ENCODE measurements at regions of chr3 and their contacts with region 1.

Region 1: DNA sequence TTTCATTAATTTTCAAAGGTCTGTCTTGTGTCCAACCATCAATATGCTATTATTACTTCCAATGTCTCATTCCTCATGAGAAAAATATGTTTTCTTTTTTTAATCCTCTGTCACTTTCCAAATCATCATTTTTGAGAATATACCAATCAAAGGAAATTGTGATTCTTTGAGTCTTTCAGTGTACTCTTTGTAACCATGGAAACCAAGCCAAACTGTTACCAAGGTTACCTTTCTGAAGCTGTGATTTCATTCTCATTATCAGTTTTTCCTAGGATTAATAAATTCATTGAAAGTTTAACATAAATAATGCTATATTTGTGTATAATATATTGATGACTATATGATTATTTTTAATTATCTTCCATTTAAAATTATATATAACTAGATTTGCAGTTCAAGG is 16.6 kb upstream of the PLSCR5 start:
- DNase-seq: no peak
- H3K4me3 ChIP-seq: no peak overlapping the region
- H3K27ac ChIP-seq: no peak overlapping the region
- H3K4me1 ChIP-seq: no peaks in the 10 kb centered on the region
- H3K27me3 ChIP-seq: no peaks in the 10 kb centered on the region
- CTCF ChIP-seq: no peak

Region 2: DNA sequence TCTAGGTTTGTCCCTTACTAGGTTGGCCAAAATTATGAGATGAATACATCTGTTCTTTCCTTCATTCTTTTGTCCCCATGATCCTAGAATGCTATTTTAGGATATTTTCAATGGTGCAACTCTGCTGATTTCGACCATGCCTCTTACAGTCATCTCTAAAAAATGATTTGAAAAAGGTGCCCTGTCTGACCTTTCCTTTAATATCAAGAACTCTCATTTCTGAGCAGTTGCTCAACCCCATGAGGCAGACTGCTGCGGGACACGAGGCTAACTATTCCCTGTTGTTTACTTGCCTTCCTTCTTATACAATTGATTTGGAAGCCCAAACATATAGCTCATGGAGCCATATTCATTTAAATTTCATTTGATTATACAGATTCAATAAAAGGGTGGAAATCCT is 166.9 kb before region 1 on chr3:
- intact Hi-C with region 1: no loop called
- DNase-seq: no peak
- H3K4me3 ChIP-seq: no peak overlapping the region
- H3K27ac ChIP-seq: no peak overlapping the region
- H3K4me1 ChIP-seq: no peaks in the 10 kb centered on the region
- H3K27me3 ChIP-seq: no peaks in the 10 kb centered on the region
- CTCF ChIP-seq: no peak

Region 3: GRCh38 chr3:146469150-146470017 is 152.3 kb before region 1 on chr3 and contains the start of gene PLSCR2:
- intact Hi-C with region 1: no loop called
- DNase-seq: peak in 1 of 2 donors; percentile 79
- H3K4me3 ChIP-seq: peak within 1 kb of the TSS; percentile 55 to 66
- H3K27ac ChIP-seq: peak within 1 kb of the TSS; percentile 19 to 68
- H3K4me1 ChIP-seq: peaks cover 0 to 24% (median 7%) of the 10 kb centered on the region in 4 donors
- H3K27me3 ChIP-seq: no peaks in the 10 kb centered on the region
- CTCF ChIP-seq: no peak

Region 4: GRCh38 chr3:147572970-147573340 is 951.2 kb after region 1 on chr3:
- intact Hi-C with region 1: loop called (anchors 5 kb)
- DNase-seq: no peak
- H3K4me3 ChIP-seq: no peak overlapping the region
- H3K27ac ChIP-seq: no peak overlapping the region
- H3K4me1 ChIP-seq: no peaks in the 10 kb centered on the region
- H3K27me3 ChIP-seq: no peaks in the 10 kb centered on the region
- CTCF ChIP-seq: no peak

Measured in tibial artery (tissue), 4 donors.